CD8-positive, alpha-beta T cell (primary cell): ENCODE measurements at regions of chr5 and their contacts with region 1.

Region 1: GRCh38 chr5:71455427-71456361 is at the start of gene BDP1:
- DNase-seq: peak; percentile 93 to 99 (median 97)
- ATAC-seq: peak; percentile 87
- H3K4me3 ChIP-seq: peak within 1 kb of the TSS; percentile 81 to 84
- H3K4me3 Mint-ChIP-seq: peak within 1 kb of the TSS; percentile 100
- H3K27ac ChIP-seq: peak within 1 kb of the TSS; percentile 90 to 92
- H3K27ac Mint-ChIP-seq: peak within 1 kb of the TSS; percentile 100
- H3K4me1 ChIP-seq: peaks cover 19% of the 10 kb centered on the region
- H3K4me1 Mint-ChIP-seq: peaks cover 29% of the 10 kb centered on the region
- H3K27me3 ChIP-seq: peaks cover 0 to 10% of the 10 kb centered on the region in 2 experiments
- H3K27me3 Mint-ChIP-seq: peaks cover 2% of the 10 kb centered on the region
- CTCF ChIP-seq: peak; percentile 48
- total RNA-seq, gene BDP1: 29.6 to 33.2 TPM

Region 2: GRCh38 chr5:71601222-71602041 is 145.7 kb after region 1 on chr5:
- CTCF ChIA-PET with region 1: no interaction called
- POLR2A ChIA-PET with region 1: no interaction called
- intact Hi-C with region 1: loop called (anchors 1 to 2 kb)
- DNase-seq: peak; percentile 25 to 85 (median 74)
- ATAC-seq: peak; percentile 85
- H3K4me3 ChIP-seq: no peak overlapping the region
- H3K4me3 Mint-ChIP-seq: no peak overlapping the region
- H3K27ac ChIP-seq: peak overlapping the region; percentile 14 to 73
- H3K27ac Mint-ChIP-seq: peak overlapping the region; percentile 86
- H3K4me1 ChIP-seq: peaks cover 17% of the 10 kb centered on the region
- H3K4me1 Mint-ChIP-seq: peaks cover 26% of the 10 kb centered on the region
- H3K27me3 ChIP-seq: no peaks in the 10 kb centered on the region
- H3K27me3 Mint-ChIP-seq: no peaks in the 10 kb centered on the region
- CTCF ChIP-seq: peak; percentile 72